ENCODE measurements at regions of chr3 and their contacts with region 1.

Region 1: GRCh38 chr3:11556851-11557644 is 86.7 kb downstream of the VGLL4 start:
- DNase-seq: peak; percentile 88
- ATAC-seq: peak; percentile 33
- H3K4me3 ChIP-seq: no peak overlapping the region
- H3K27ac ChIP-seq: no peak overlapping the region
- H3K4me1 ChIP-seq: peaks cover 33% of the 10 kb centered on the region
- H3K27me3 ChIP-seq: no peaks in the 10 kb centered on the region
- CTCF ChIP-seq: no peak
- POLR2A ChIP-seq: no peak
- RAD21 ChIP-seq: no peak

Region 2: GRCh38 chr3:9725775-9726515 is 1831.1 kb before region 1 on chr3:
- CTCF ChIA-PET with region 1: no interaction called
- POLR2A ChIA-PET with region 1: interaction called, 12 read pairs
- dilution Hi-C with region 1: no loop called
- in situ Hi-C with region 1: no loop called
- intact Hi-C with region 1: no loop called
- DNase-seq: no peak
- ATAC-seq: no peak
- H3K4me3 ChIP-seq: no peak overlapping the region
- H3K27ac ChIP-seq: no peak overlapping the region
- H3K4me1 ChIP-seq: no peaks in the 10 kb centered on the region
- H3K27me3 ChIP-seq: no peaks in the 10 kb centered on the region; the same call in 1 of the 2 replicates
- CTCF ChIP-seq: no peak
- POLR2A ChIP-seq: no peak
- RAD21 ChIP-seq: no peak

Region 3: DNA sequence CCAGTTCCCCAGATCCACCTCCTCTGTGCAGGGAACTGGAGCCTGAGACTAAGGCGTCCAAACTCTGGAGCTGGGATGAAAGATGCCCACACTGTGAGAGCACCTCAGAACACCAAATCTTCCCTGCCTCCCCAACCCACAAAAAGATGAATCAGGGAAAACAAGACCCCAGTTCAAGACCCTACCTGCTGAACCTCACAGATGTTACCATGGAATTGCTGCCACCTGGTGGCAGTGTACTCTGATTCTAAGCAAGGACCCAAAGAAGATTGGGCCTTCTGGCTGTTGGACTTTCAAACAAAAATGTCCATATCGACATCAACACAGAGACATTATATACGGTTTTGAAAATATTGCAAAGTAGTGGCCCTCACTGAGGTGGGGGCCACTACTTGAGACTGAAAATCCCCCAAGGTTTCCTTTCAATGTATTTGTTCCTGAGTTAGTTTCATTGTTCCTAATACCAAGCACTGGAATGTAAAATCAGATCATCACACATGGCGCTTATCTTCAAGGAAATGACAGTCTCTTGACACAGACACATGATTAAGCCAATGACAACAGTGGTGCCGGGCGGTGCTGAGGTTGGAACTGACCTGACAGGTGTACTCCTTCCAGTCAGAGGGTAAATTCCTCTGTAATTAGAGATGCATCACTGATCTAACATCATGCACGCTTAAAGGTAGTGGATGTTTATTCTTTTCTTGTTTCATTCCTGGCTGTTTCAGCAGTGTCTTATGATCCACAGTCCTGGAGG is 673.4 kb before region 1 on chr3:
- CTCF ChIA-PET with region 1: no interaction called
- POLR2A ChIA-PET with region 1: no interaction called
- dilution Hi-C with region 1: no loop called
- in situ Hi-C with region 1: no loop called
- intact Hi-C with region 1: no loop called
- DNase-seq: peak; percentile 3
- ATAC-seq: no peak
- H3K4me3 ChIP-seq: no peak overlapping the region
- H3K27ac ChIP-seq: no peak overlapping the region
- H3K4me1 ChIP-seq: no peaks in the 10 kb centered on the region
- H3K27me3 ChIP-seq: 0 out of 2 replicates have a peak, but pooled peaks cover 1% of the 10 kb centered on the region
- CTCF ChIP-seq: peak; percentile 25; the same call in 1 of the 2 replicates
- POLR2A ChIP-seq: no peak
- RAD21 ChIP-seq: 0 out of 2 replicates have a peak, but pooled peaks have one; percentile 13

Region 4: GRCh38 chr3:11523572-11524101 is 33.4 kb before region 1 on chr3:
- CTCF ChIA-PET with region 1: no interaction called
- POLR2A ChIA-PET with region 1: no interaction called
- dilution Hi-C with region 1: no loop called
- in situ Hi-C with region 1: no loop called
- intact Hi-C with region 1: no loop called
- DNase-seq: no peak
- ATAC-seq: no peak
- H3K4me3 ChIP-seq: no peak overlapping the region
- H3K27ac ChIP-seq: no peak overlapping the region
- H3K4me1 ChIP-seq: peaks cover 4% of the 10 kb centered on the region; the same call in 1 of the 2 replicates
- H3K27me3 ChIP-seq: no peaks in the 10 kb centered on the region
- CTCF ChIP-seq: no peak
- POLR2A ChIP-seq: no peak
- RAD21 ChIP-seq: no peak

Region 5: GRCh38 chr3:11576453-11576852 is 19.4 kb after region 1 on chr3:
- CTCF ChIA-PET with region 1: no interaction called
- POLR2A ChIA-PET with region 1: no interaction called
- dilution Hi-C with region 1: no loop called
- in situ Hi-C with region 1: no loop called
- intact Hi-C with region 1: no loop called
- DNase-seq: no peak
- ATAC-seq: no peak
- H3K4me3 ChIP-seq: no peak overlapping the region
- H3K27ac ChIP-seq: no peak overlapping the region
- H3K4me1 ChIP-seq: peaks cover 5% of the 10 kb centered on the region
- H3K27me3 ChIP-seq: no peaks in the 10 kb centered on the region
- CTCF ChIP-seq: no peak
- POLR2A ChIP-seq: no peak
- RAD21 ChIP-seq: no peak

Region 6: GRCh38 chr3:11634081-11634635 is 77.1 kb after region 1 on chr3:
- CTCF ChIA-PET with region 1: no interaction called
- POLR2A ChIA-PET with region 1: no interaction called
- dilution Hi-C with region 1: no loop called
- in situ Hi-C with region 1: no loop called
- intact Hi-C with region 1: loop called (anchors 2 kb)
- DNase-seq: no peak
- ATAC-seq: no peak
- H3K4me3 ChIP-seq: no peak overlapping the region
- H3K27ac ChIP-seq: no peak overlapping the region
- H3K4me1 ChIP-seq: peaks cover 41% of the 10 kb centered on the region
- H3K27me3 ChIP-seq: no peaks in the 10 kb centered on the region
- CTCF ChIP-seq: no peak
- POLR2A ChIP-seq: no peak
- RAD21 ChIP-seq: no peak

Region 7: DNA sequence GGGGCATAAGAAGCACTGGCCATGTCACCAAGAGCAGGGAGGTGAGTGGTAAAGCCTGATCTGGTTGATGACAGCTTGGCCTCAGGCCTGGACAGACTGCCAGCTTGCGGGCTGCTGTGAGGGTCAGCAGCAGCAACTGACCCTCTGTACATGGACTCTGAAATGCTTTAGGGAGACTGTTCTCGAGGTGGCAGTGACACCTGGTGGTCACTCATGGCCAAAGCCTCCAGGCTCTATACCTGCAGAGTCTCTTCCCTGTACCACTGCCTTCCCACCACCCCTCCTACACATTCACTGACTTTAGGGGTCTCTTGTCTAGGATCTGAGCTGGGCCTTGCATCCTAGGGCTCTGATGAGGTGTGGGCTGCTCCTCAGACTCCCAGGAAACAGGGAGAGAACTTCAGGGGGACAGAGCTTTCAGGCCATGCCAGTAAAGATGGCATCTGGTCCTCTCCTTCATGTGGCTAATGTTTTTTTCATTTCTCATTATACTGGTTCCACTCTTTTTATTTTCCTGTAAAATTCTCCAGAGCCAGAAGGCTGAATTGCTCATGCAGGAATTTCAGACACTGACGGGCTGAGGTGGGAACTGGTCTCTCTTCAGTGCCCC is 618.9 kb after region 1 on chr3:
- CTCF ChIA-PET with region 1: no interaction called
- POLR2A ChIA-PET with region 1: no interaction called
- dilution Hi-C with region 1: no loop called
- in situ Hi-C with region 1: no loop called
- intact Hi-C with region 1: no loop called
- DNase-seq: peak; percentile 50
- ATAC-seq: peak; percentile 92
- H3K4me3 ChIP-seq: no peak overlapping the region
- H3K27ac ChIP-seq: no peak overlapping the region
- H3K4me1 ChIP-seq: peaks cover 12% of the 10 kb centered on the region
- H3K27me3 ChIP-seq: no peaks in the 10 kb centered on the region
- CTCF ChIP-seq: peak; percentile 77
- POLR2A ChIP-seq: no peak
- RAD21 ChIP-seq: peak; percentile 88

Measured in IMR-90 (cell line).